Activated CD4-positive, alpha-beta T cell treated with anti-CD3 and anti-CD28 coated beads, Interleukin-2, amount 10 ng/mL, durations not matched to agents 24 days and 14 days (primary cell): ENCODE measurements at regions of chr15 and their contacts with region 1.

Region 1: DNA sequence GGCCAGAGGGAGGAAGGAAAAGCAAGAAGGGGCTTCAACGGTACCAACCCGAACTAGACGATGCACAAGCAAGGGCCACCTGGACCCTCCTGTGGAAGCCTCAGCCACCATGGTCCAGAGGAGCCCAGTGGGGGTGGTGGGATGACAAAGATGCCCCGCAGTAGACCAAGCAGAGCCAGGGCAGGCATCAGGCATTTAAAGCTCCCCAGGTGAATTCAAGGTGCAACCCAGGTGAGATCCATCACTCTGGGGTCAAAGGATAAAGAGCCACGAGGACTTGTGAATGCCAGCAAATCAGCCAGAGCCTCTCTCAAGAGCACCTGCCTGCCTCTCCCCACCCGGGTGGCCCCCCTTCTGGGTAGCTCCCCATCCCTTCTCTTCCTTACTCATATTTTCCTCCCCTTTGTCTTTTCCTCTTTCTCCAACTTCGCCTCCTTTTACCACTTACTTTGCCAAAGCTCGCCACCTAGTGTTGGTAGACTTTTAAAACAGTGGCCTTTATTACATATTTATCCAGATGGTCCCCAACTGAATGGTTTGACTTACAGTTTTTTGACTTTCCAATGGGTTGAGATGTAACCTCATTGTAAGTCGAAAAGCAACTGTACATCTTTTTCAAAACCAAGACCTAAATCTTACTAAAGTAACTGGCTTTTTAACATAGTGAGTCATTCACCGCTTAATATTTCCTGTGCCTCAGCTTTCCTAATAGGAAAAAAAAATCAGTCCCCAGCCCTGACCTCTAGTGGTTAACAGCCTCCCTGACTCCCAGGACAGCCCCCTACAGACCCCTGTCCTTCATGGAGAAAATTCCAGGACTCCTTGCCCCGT is 18.8 kb downstream of the PLA2G4F start:
- DNase-seq: peak; percentile 73
- H3K4me3 Mint-ChIP-seq: no peak overlapping the region
- H3K27ac Mint-ChIP-seq: no peak overlapping the region
- H3K4me1 Mint-ChIP-seq: peaks cover 2% of the 10 kb centered on the region
- H3K27me3 Mint-ChIP-seq: peaks cover 2% of the 10 kb centered on the region

Region 2: GRCh38 chr15:41989259-41989933 is 148.2 kb before region 1 on chr15:
- intact Hi-C with region 1: loop called (anchors 2 kb)
- DNase-seq: peak; percentile 96
- H3K4me3 Mint-ChIP-seq: no peak overlapping the region
- H3K27ac Mint-ChIP-seq: no peak overlapping the region
- H3K4me1 Mint-ChIP-seq: no peaks in the 10 kb centered on the region
- H3K27me3 Mint-ChIP-seq: no peaks in the 10 kb centered on the region

Region 3: GRCh38 chr15:42066764-42067415 is 70.8 kb before region 1 on chr15:
- intact Hi-C with region 1: loop called (anchors 2 kb)
- DNase-seq: no peak
- H3K4me3 Mint-ChIP-seq: no peak overlapping the region
- H3K27ac Mint-ChIP-seq: no peak overlapping the region
- H3K4me1 Mint-ChIP-seq: peaks cover 2% of the 10 kb centered on the region
- H3K27me3 Mint-ChIP-seq: peaks cover 14% of the 10 kb centered on the region

Region 4: GRCh38 chr15:42084460-42085235 is 53.0 kb before region 1 on chr15:
- intact Hi-C with region 1: loop called (anchors 1 kb)
- DNase-seq: peak; percentile 84
- H3K4me3 Mint-ChIP-seq: no peak overlapping the region
- H3K27ac Mint-ChIP-seq: no peak overlapping the region
- H3K4me1 Mint-ChIP-seq: peaks cover 3% of the 10 kb centered on the region
- H3K27me3 Mint-ChIP-seq: peaks cover 14% of the 10 kb centered on the region